Lower leg skin (tissue), 4 donors: ENCODE measurements at regions of chr13 and their contacts with region 1.

Region 1: DNA sequence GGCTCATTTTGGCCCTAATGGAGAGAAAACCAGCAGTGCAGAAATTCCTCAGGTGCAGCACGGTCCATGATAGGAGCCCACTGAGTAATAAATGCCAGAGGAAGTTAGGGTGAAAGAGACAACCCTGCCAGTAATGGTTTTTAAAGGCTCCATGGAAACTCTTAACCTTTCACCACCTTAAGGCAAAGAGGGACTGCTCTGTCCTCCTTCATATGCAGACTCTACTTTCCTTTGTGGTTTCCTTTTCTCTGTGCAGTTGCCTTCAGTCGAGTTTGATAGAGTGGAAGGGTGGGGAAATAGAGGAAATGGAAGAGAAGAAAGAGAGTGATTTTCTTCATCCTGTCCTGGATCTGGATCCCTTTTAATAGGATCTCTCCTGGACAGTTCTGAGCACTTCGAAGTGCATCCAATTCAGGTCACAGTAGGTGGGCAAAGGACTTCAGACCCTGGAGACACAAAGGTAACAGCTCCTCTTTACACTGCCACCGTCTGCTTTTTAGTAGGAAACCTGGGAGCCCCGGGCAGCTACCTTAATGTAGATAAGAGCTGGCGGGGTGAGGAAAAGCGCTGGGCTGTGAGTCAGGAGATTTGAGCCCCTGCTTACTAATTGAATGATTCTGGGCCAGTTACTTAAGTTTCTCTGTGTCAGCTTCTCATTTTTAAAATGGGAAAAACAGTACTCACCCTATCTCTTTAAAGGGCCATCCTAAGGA is 294.8 kb downstream of the KCNRG start:
- DNase-seq: no peak
- H3K4me3 ChIP-seq: no peak overlapping the region
- CTCF ChIP-seq: no peak
- POLR2A ChIP-seq: no peak

Region 2: GRCh38 chr13:49472186-49472585 is 837.9 kb before region 1 on chr13:
- intact Hi-C with region 1: no loop called
- DNase-seq: no peak
- H3K4me3 ChIP-seq: no peak overlapping the region
- CTCF ChIP-seq: no peak
- POLR2A ChIP-seq: no peak

Region 3: DNA sequence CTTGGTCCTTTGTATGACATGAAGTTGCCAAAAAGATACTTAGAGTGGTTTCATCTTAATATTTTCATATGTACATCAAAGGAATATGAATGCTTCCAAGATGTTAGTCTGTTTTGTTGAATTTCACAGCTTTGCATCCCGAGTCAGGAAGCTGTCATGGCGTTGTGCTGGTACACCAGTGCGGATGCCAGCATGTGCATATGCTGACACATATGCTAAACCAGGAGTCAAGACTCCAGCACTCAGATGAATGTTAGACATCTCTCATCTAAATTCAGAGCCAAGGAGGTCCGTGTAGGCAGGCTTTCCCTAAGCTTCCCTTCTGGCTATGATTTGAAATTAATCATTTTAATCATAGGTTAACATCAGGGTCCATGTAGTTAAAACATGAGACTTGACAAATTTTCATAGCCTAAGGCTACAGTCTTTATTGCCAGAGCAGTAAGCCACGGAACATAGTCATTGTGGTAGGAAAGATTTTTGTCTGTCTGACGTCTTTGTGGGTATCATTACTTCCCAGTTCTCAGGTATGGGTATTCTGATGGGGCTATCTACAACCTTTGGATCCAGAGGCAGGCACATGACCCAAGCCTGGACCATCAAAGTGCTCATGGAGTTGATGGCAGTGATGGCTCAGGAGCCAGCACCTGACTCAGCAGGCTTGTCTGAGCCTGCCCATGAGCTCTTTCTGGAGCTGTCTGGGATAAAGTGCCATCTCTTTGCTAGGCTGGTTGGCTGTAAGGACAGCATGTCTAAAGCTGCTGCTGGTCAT is 48.7 kb before region 1 on chr13:
- intact Hi-C with region 1: loop called (anchors 5 kb)
- DNase-seq: no peak
- H3K4me3 ChIP-seq: no peak overlapping the region
- CTCF ChIP-seq: no peak
- POLR2A ChIP-seq: no peak